ENCODE measurements at regions of chr3 and their contacts with region 1.

Region 1: GRCh38 chr3:111539351-111540331 is 2.4 kb upstream of the CD96 start:
- DNase-seq: peak; percentile 78
- H3K4me3 Mint-ChIP-seq: peak overlapping the region; percentile 64
- H3K27ac Mint-ChIP-seq: peak overlapping the region; percentile 83
- H3K4me1 Mint-ChIP-seq: peaks cover 71% of the 10 kb centered on the region
- H3K27me3 Mint-ChIP-seq: no peaks in the 10 kb centered on the region

Region 2: DNA sequence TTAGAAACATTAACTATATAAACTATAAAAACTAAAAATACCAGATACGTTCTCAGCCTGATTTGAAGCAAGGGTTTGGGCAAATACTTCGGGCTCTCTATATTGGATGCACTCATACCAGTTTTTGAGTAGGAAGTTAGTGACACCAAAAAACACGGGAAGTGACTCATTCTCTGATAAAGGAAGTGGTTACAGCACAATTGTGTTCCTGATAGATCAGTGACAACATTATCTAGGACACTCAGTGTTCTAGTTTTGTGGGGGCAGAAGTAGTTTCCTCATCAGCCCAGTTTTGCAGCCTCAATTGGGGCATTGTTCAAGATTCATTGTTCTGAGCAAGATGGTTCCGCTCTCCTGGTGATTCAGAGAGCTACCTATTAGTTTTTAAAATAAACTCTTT is 1732.7 kb before region 1 on chr3:
- CTCF ChIA-PET with region 1: no interaction called
- POLR2A ChIA-PET with region 1: no interaction called
- intact Hi-C with region 1: loop called (anchors 2 kb)
- DNase-seq: peak; percentile 44
- H3K4me3 Mint-ChIP-seq: no peak overlapping the region
- H3K27ac Mint-ChIP-seq: peak overlapping the region; percentile 62
- H3K4me1 Mint-ChIP-seq: peaks cover 34% of the 10 kb centered on the region
- H3K27me3 Mint-ChIP-seq: no peaks in the 10 kb centered on the region

Region 3: DNA sequence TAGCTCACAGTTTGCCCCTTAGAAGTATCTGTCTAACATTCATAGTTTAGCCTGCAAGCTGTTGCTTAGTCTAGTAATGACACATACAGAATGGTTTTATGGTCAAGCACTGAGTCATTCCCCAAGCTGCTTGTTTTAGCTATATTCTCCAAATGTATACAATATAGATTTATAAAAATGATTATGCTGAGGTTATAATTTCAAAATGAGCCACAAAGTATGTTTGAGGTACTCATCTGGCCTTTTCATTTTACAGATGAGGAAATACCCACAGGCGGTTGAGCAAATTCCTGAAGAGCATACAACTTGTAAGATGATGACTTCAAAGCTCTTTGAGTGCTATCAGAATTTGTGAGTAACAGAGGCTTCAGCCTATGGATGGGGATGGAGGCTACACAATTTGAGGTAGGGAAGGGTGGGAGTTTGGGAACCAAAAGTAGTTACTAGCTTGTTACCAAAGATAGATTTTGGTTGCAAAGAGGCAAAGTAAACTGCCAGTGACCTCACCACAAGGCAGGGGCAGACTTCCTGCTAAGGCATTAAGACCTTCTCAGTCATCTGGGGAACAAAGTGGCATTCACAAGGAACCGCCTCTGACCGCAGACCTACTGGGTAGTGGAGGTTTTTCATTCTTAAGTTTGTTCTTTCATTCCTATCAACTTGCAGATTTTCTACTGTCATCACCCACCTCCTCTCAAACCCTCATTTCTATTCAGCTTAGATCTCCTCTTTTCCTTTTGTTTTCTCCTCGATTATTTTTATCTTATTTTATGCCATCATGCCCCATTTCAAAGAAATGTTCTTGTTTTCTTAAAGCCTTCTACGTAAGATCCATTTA is 725.3 kb before region 1 on chr3:
- CTCF ChIA-PET with region 1: no interaction called
- POLR2A ChIA-PET with region 1: interaction called, 3 read pairs
- intact Hi-C with region 1: loop called (anchors 1 kb)
- DNase-seq: peak; percentile 81
- H3K4me3 Mint-ChIP-seq: peak overlapping the region; percentile 12
- H3K27ac Mint-ChIP-seq: peak overlapping the region; percentile 78
- H3K4me1 Mint-ChIP-seq: peaks cover 19% of the 10 kb centered on the region
- H3K27me3 Mint-ChIP-seq: peaks cover 15% of the 10 kb centered on the region

Region 4: GRCh38 chr3:111311709-111312235 is 227.9 kb before region 1 on chr3:
- CTCF ChIA-PET with region 1: interaction called, 3 read pairs
- POLR2A ChIA-PET with region 1: no interaction called
- intact Hi-C with region 1: loop called (anchors 5 kb)
- DNase-seq: no peak
- H3K4me3 Mint-ChIP-seq: no peak overlapping the region
- H3K27ac Mint-ChIP-seq: peak overlapping the region; percentile 73
- H3K4me1 Mint-ChIP-seq: peaks cover 30% of the 10 kb centered on the region
- H3K27me3 Mint-ChIP-seq: no peaks in the 10 kb centered on the region

Region 5: GRCh38 chr3:111392901-111393351 is 146.7 kb before region 1 on chr3:
- CTCF ChIA-PET with region 1: no interaction called
- POLR2A ChIA-PET with region 1: no interaction called
- intact Hi-C with region 1: loop called (anchors 2 kb)
- DNase-seq: peak; percentile 45
- H3K4me3 Mint-ChIP-seq: no peak overlapping the region
- H3K27ac Mint-ChIP-seq: no peak overlapping the region
- H3K4me1 Mint-ChIP-seq: peaks cover 19% of the 10 kb centered on the region
- H3K27me3 Mint-ChIP-seq: no peaks in the 10 kb centered on the region

Region 6: DNA sequence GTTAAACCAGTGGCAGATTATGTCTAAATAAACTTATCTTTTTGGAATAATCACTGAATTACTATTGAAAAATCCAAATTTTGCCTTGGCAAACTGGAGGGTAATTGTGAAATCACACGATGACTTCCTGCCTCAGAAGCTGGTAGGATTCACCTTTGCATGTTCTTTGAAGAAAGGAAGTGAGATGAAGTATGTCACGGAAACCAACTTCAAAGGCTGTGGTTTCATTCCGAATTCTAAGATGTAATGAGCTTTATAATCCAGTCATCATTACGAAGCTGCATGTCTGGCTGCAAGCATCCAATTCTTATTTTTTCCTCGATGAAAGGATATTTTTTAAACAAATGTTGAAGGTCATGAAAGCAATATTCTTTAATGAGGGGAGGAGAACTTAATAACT is 70.5 kb after region 1 on chr3:
- CTCF ChIA-PET with region 1: interaction called, 38 read pairs
- POLR2A ChIA-PET with region 1: interaction called, 18 read pairs
- intact Hi-C with region 1: loop called (anchors 1 kb)
- DNase-seq: no peak
- H3K4me3 Mint-ChIP-seq: peak overlapping the region; percentile 50
- H3K27ac Mint-ChIP-seq: peak overlapping the region; percentile 92
- H3K4me1 Mint-ChIP-seq: peaks cover 96% of the 10 kb centered on the region
- H3K27me3 Mint-ChIP-seq: no peaks in the 10 kb centered on the region

Region 7: GRCh38 chr3:111831840-111832239 is 292.2 kb after region 1 on chr3:
- CTCF ChIA-PET with region 1: no interaction called
- POLR2A ChIA-PET with region 1: no interaction called
- intact Hi-C with region 1: no loop called
- DNase-seq: peak; percentile 53
- H3K4me3 Mint-ChIP-seq: no peak overlapping the region
- H3K27ac Mint-ChIP-seq: no peak overlapping the region
- H3K4me1 Mint-ChIP-seq: peaks cover 6% of the 10 kb centered on the region
- H3K27me3 Mint-ChIP-seq: no peaks in the 10 kb centered on the region